Heart right ventricle (tissue), 16 donors: ENCODE measurements at regions of chr22 and their contacts with region 1.

Region 1: GRCh38 chr22:37324340-37325038 is 42.2 kb downstream of the CYTH4 start:
- DNase-seq: no peak
- ATAC-seq: no peak
- H3K4me3 ChIP-seq: no peak overlapping the region
- H3K27ac ChIP-seq: no peak overlapping the region
- H3K4me1 ChIP-seq: peaks cover 0 to 8% (median 6%) of the 10 kb centered on the region in 9 donors
- H3K27me3 ChIP-seq: peaks cover 6 to 96% (median 86%) of the 10 kb centered on the region in 7 donors
- CTCF ChIP-seq: no peak

Region 2: DNA sequence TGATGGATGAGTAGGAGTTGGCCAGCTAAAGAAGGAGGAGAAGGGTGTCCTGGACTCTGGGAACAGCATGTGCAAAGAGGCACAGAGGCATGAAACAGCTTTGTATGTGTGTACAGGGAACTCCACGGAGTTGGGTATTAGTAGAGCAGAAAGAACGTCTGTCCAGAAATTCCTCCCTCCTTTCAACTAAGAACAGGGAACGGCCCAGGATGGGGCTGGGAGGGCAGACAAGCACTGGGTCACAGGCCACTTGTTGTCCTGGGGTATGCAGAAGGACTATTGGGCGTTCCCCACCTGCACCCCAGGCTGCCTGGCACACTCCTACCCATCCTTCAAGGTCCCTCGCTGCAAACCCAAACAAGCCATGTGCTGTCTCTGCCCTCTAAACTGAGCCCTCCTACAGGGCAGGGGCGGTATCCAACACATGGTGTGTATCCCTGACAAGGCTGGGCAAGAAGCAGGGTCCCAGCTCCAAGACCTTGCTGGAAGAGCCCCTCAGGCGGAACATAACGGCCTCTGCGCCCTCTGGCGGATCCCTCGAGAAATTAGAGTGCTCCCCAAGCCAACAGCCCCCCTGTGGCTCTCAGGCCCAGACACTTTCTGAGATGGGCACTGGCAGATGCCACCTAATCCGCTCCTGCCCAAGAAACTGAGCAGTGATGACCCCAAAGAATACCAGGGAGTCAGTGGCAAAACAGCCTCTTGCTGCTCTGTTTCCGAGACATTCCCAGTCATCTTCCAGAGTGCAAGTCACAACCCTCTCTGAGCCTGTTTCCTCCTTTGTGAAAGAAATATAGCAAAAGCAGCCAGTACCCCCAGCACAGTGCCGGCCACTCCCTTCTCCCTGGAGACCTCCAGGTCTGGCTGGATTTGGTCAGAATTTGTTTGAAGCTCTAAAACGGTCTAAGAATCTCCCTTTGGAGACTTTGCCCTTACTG is 104.4 kb after region 1 on chr22:
- intact Hi-C with region 1: loop called in 6 of 10 experiments (anchors 5 to 10 kb)
- DNase-seq: peak in 1 of 2 donors; percentile 45
- ATAC-seq: peak in 2 of 8 donors; percentile 10 to 40
- H3K4me3 ChIP-seq: no peak overlapping the region
- H3K27ac ChIP-seq: no peak overlapping the region
- H3K4me1 ChIP-seq: peaks cover 0 to 12% (median 5%) of the 10 kb centered on the region in 9 donors
- H3K27me3 ChIP-seq: peaks cover 34 to 100% (median 98%) of the 10 kb centered on the region in 7 donors
- CTCF ChIP-seq: peak; percentile 27 to 71 (median 59)